Activated CD4-positive, alpha-beta T cell treated with anti-CD3 and anti-CD28 coated beads, Interleukin-2, amount 10 ng/mL, durations not matched to agents 7 days and 5 days (primary cell): ENCODE measurements at regions of chr14 and their contacts with region 1.

Region 1: DNA sequence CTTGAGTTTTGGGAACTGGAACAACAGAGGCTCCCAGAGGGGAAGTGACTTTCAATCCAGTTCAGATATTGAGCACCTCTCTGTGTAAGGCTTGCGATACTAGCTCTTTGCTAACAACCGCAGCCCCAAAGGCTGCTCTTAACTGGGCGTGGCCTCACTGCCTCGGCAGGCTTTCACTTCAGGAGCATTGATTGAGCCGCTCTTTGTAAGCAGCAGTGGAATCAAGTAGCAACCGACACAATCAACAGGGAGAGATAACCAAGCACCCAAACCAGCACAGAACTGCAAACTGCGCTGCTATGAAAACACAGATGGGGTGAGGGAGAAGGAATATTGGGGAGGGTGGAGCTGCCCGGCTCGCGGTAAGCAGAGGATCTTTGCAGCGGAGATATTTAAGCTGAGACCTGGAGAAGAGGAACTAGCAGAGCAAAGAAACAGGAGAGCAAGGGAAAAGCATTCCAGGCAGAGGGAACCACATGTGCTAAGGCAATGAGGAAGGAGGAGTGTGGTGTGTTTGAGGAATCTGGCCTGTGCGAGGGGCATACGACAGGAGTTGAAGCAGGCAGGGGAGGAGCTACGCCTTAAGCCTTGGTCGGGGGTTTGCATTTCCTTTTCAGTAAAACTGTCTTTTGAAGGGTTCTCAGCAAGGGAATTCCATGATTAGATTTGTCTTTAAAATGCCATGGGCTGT is 17.3 kb upstream of the YY1 start:
- DNase-seq: peak; percentile 84
- H3K4me3 Mint-ChIP-seq: no peak overlapping the region
- H3K27ac Mint-ChIP-seq: no peak overlapping the region
- H3K4me1 Mint-ChIP-seq: peaks cover 23% of the 10 kb centered on the region
- H3K27me3 Mint-ChIP-seq: no peaks in the 10 kb centered on the region

Region 2: GRCh38 chr14:99604283-99604765 is 617.4 kb before region 1 on chr14:
- CTCF ChIA-PET with region 1: no interaction called
- POLR2A ChIA-PET with region 1: no interaction called
- DNase-seq: peak; percentile 91
- H3K4me3 Mint-ChIP-seq: peak overlapping the region; percentile 87
- H3K27ac Mint-ChIP-seq: peak overlapping the region; percentile 92
- H3K4me1 Mint-ChIP-seq: peaks cover 20% of the 10 kb centered on the region
- H3K27me3 Mint-ChIP-seq: peaks cover 12% of the 10 kb centered on the region

Region 3: GRCh38 chr14:100015251-100015655 is 206.4 kb before region 1 on chr14:
- CTCF ChIA-PET with region 1: no interaction called
- POLR2A ChIA-PET with region 1: no interaction called
- DNase-seq: no peak
- H3K4me3 Mint-ChIP-seq: no peak overlapping the region
- H3K27ac Mint-ChIP-seq: no peak overlapping the region
- H3K4me1 Mint-ChIP-seq: peaks cover 13% of the 10 kb centered on the region
- H3K27me3 Mint-ChIP-seq: no peaks in the 10 kb centered on the region

Region 4: DNA sequence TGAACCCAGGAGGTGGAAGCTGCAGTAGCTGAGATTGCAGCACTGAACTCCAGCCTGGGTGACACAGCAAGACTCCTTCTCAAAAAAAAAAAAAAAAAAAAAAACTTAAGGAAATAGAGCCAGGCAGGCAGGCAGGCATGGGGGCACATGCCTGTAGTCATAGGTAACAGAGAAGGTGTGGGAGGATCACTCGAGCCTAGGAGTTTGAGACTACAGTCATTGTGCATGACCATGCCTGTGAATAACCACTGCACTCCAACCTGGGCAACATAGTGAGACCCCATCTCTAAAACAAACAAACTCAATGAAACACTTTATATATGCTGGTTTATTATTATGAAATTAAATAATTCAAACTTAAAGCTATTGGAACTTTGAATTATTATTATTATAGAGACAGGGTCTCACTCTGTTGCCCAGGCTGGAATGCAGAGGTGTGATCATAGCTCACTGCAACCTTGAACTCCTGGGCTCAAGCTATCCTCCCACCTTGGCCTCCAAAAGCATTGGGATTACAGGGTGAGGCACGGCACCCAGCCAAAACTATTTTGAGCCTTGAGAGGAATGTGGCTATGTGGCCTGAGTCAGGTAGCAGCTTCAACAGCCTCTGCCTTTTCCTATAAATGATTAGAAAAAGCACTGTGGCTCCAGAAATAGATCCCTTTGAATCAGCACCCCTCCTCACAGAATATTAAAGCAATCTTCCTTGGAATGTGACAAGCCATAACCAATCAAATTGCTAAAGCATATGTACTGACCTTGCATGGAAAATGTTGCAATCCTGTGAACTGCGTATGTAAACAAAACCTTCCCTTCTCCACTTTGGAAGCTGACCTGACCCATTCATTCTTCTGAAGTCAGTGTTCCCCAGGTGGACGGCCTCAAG is 17.5 kb before region 1 on chr14:
- CTCF ChIA-PET with region 1: interaction called, 12 read pairs
- POLR2A ChIA-PET with region 1: no interaction called
- DNase-seq: no peak
- H3K4me3 Mint-ChIP-seq: no peak overlapping the region
- H3K27ac Mint-ChIP-seq: no peak overlapping the region
- H3K4me1 Mint-ChIP-seq: no peaks in the 10 kb centered on the region
- H3K27me3 Mint-ChIP-seq: no peaks in the 10 kb centered on the region

Region 5: DNA sequence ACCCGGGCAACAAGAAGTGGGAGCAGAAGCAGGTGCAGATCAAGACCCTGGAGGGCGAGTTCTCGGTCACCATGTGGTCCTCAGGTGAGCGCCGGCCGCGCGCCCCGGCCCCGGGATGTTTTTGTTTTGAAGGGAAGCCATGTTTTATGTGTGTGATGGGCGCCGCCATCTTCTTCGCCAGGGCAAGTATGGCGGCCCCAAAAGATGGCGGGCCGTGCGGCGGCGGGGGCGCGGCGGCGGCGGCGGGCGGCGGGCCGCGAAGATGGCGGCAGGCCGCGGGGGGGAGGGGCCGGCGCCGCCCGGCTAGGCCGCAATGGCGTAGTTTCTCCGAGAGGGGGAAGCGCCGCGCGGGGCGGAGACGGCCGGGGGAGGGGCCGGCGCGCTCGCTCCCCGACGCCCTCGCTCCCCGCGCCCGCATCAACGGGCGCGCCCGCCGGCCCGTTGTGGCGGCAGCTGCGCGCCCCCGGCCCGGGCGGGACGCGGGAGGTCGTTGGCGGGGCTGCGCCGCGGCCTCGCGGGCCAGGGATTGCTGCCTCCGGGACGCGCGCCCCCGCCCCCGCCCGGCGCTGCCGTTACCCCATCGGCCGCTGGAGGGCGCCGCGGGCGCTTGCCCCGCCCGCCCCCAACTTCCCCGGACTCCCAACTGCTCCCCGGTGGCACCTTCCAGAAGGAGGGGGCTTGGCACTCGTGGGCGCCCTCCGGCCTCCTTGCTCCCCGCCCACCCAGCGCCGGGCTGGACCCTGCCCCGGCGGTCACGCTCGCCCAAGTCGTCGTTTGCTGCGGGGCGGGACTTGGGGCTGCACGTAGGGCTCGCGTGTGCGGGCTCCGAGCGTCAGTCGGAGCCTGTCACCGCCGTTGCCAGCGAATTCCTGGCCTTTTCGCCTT is 18.4 kb after region 1 on chr14:
- CTCF ChIA-PET with region 1: interaction called, 68 read pairs
- POLR2A ChIA-PET with region 1: no interaction called
- DNase-seq: peak; percentile 84
- H3K4me3 Mint-ChIP-seq: peak overlapping the region; percentile 94
- H3K27ac Mint-ChIP-seq: peak overlapping the region; percentile 92
- H3K4me1 Mint-ChIP-seq: peaks cover 52% of the 10 kb centered on the region
- H3K27me3 Mint-ChIP-seq: no peaks in the 10 kb centered on the region

Region 6: DNA sequence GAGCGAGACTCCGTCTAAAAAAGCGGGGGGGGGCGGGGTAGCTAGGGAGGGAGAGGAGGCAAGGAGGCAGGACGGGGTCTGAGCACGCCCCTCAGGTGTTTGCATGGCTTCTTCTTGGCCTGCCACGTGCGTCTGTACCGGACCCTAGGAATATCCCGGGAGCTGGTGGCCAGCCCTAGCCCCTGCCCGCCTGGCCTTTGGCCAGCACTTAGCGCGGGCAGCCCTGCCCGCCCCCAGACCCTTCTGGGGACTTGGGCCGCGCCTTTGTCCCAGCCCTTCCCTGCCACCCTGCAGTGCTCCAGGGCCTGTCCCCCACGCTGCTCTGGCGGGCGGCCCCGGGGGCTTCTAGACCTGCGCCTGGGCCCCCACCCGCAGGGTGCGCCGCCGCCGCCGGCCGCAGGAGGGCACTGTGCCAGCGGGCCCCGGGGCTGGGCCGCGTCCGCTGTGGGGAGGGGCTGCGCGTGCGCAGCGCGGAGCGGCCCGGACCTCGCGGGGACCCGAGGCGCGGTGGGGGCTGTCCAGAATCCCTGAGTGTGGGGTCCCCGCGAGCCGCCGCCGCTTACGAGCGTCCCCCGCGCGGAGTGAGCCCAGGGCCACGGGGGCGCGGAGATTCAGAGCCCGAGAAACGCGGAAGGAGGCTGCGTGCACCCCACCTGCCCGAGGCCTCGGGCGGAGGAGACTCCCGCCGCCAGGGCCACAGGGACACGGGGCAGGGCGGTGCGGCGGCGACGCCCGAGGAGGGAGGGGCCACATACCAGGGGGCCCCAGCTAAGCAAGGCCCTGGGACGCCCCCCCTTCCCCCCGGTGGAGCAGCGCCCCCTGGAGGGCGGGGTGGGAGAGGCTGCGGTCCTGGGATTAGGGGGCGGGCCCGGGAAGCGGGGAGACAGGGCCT is 63.6 kb after region 1 on chr14:
- CTCF ChIA-PET with region 1: interaction called, 10 read pairs
- POLR2A ChIA-PET with region 1: no interaction called
- DNase-seq: peak; percentile 76
- H3K4me3 Mint-ChIP-seq: peak overlapping the region; percentile 72
- H3K27ac Mint-ChIP-seq: peak overlapping the region; percentile 83
- H3K4me1 Mint-ChIP-seq: peaks cover 13% of the 10 kb centered on the region
- H3K27me3 Mint-ChIP-seq: no peaks in the 10 kb centered on the region